ENCODE measurements at regions of chr22 and their contacts with region 1.

Region 1: GRCh38 chr22:37972527-37972926 is 11.8 kb downstream of the SOX10 start:
- DNase-seq: no peak
- H3K4me3 ChIP-seq: no peak overlapping the region
- H3K27ac ChIP-seq: no peak overlapping the region
- H3K4me1 ChIP-seq: no peaks in the 10 kb centered on the region
- H3K27me3 ChIP-seq: no peaks in the 10 kb centered on the region
- CTCF ChIP-seq: no peak

Region 2: DNA sequence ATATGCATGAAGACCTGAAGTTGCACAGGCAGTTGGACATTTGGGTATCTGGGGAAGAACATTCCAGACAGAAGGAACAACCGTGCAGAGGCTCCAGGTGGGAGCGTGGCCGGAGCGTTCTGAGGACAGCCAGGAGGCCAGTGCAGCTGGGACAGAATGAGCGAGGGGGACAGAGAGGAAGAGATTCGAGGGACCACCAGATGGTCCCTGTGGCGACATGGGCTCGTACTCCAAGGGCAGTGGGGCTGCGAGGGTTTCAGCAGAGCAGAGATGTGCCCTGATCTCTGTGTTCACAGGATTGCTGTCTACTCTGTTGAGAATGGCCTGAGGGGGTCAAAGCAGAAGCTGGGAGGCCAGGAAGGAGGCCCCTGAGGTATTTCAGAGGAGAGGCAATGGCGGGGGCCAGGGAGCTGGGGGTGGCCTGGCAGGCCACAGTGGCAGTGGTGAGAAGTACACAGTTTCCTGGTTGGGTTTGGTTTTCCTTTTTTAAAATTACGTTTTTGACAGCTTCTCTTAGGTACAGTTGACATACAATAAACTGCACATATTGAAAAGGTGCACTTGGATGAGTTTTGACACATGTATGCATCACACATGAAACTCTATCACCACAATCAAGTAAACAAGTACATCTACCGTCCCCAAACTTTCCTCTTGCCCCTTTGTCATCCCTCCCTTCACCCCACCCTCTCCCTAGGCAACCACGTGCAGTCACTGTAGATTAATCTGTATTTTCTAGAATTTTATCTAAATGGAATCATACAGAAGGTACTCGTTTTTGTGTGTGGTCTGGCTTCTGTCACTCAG is 36.7 kb after region 1 on chr22:
- CTCF ChIA-PET with region 1: no interaction called
- POLR2A ChIA-PET with region 1: no interaction called
- intact Hi-C with region 1: no loop called
- DNase-seq: no peak
- H3K4me3 ChIP-seq: no peak overlapping the region
- H3K27ac ChIP-seq: no peak overlapping the region
- H3K4me1 ChIP-seq: no peaks in the 10 kb centered on the region
- H3K27me3 ChIP-seq: no peaks in the 10 kb centered on the region
- CTCF ChIP-seq: no peak

Region 3: DNA sequence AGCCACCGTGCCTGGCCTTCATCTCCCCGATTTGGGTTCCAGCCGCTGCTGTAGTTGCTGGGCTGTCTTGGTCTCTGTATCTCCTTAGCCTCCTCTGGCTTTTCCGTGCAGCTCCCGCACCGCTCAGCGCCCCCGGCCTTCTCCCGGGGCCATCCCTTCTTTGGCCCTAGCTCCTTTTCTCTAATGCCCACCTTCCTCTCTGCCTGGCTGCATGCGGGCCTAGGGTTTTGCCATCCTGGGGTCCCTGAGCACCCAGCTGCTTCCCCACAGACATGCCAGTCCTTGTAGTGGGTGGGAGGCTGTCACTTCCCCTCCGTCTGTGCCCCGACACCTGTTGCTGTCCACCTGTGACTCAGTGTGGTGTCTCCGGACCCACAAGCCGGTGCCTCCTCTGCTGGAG is 446.1 kb after region 1 on chr22:
- CTCF ChIA-PET with region 1: interaction called, 20 read pairs
- POLR2A ChIA-PET with region 1: no interaction called
- intact Hi-C with region 1: no loop called
- DNase-seq: peak in 1 of 2 experiments; percentile 21
- H3K4me3 ChIP-seq: no peak overlapping the region
- H3K27ac ChIP-seq: no peak overlapping the region
- H3K4me1 ChIP-seq: no peaks in the 10 kb centered on the region
- H3K27me3 ChIP-seq: no peaks in the 10 kb centered on the region
- CTCF ChIP-seq: no peak